ENCODE measurements at regions of chr16 and their contacts with region 1.

Region 1: DNA sequence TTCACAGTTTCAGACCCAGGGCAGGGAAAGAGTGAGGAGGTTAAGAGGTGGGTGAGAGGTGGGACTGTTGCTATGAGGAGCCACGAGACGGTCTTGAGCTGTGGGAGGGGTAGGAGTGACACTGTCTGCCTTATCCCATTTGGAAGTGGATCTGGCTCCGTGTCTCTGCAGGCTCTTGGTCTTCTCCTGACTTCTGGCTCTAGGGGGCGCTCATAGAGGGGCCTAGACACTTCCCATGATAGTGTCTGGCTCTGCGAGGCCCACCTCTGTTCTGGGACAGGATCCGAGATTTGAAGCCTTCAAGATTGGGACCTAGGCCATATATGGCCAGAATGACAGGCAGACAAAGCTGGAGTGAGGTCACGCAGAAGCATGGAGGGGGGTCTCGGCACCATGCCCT is 204.5 kb downstream of the GSG1L start:
- DNase-seq: peak in 1 of 2 experiments; percentile 71
- H3K4me3 ChIP-seq: no peak overlapping the region
- H3K27ac ChIP-seq: no peak overlapping the region
- H3K4me1 ChIP-seq: no peaks in the 10 kb centered on the region
- H3K27me3 ChIP-seq: no peaks in the 10 kb centered on the region
- CTCF ChIP-seq: peak; percentile 38 to 76 (median 64)
- EP300 ChIP-seq: no peak
- POLR2A ChIP-seq: no peak
- RAD21 ChIP-seq: peak; percentile 39 to 56; a peak in 3 of 4 replicates

Region 2: GRCh38 chr16:27690608-27691007 is 168.4 kb before region 1 on chr16:
- CTCF ChIA-PET with region 1: interaction called, 23 read pairs
- POLR2A ChIA-PET with region 1: no interaction called
- DNase-seq: peak in 1 of 2 experiments; percentile 77
- H3K4me3 ChIP-seq: no peak overlapping the region
- H3K27ac ChIP-seq: no peak overlapping the region
- H3K4me1 ChIP-seq: no peaks in the 10 kb centered on the region
- H3K27me3 ChIP-seq: no peaks in the 10 kb centered on the region
- CTCF ChIP-seq: peak; percentile 69 to 94 (median 94)
- EP300 ChIP-seq: no peak
- POLR2A ChIP-seq: no peak
- RAD21 ChIP-seq: peak; percentile 83

Region 3: DNA sequence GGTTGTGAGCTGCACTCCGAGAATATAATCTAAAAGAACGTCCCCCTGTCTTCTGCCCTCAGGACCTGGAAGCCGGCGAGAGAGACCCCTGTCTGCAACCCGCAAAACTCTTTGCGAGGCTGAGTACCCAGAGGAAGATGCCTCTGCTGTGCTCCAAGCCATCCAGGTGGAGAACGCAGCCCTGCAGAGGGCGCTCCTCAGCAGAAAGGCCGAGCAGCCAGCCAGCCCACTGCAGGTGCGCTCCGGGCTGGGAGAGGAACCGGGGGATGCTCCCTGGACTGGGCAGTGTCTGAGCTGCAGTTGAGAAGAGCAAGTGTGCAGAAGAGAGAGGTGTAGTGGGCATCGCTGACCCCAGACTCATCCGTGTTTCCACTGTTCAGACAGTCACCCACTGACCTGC is 160.8 kb before region 1 on chr16:
- CTCF ChIA-PET with region 1: interaction called, 19 read pairs
- POLR2A ChIA-PET with region 1: no interaction called
- DNase-seq: peak; percentile 70 to 95
- H3K4me3 ChIP-seq: no peak overlapping the region
- H3K27ac ChIP-seq: no peak overlapping the region
- H3K4me1 ChIP-seq: peaks cover 0 to 11% (median 2%) of the 10 kb centered on the region in 4 experiments; a peak in 4 of 7 replicates
- H3K27me3 ChIP-seq: no peaks in the 10 kb centered on the region
- CTCF ChIP-seq: peak; percentile 97 to 98 (median 97)
- EP300 ChIP-seq: no peak
- POLR2A ChIP-seq: no peak
- RAD21 ChIP-seq: peak; percentile 68 to 81

Region 4: DNA sequence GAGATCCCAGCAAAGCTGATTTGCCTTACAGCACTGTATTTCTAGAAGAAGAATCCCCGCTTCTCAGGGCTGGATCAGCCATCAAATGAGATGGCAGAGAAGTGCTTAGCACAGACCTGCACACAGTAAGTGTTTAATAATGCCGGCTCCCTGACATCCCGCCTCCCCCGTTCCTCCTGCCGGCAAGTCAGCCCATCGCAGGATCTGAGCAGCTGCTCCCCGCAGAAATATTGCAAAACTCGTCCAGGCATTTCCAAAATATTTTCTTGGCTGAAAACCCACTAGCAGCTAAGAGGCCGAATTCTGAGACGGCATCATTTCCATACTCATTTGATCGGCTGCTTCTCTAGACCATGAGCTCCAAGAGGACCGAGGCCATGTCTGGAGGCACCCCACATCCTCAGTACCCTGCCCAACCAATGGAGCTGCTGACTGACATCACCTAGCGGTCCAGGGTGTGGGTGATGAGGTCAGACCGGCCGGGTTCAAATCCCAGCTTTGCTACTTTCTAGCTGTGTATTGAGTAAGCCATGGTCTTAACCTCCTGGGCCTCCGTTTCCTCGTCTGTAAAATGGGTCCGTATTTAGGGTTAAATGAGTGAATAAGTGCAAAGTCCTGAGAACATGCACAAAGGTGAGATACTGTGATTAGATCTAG is 57.6 kb before region 1 on chr16:
- CTCF ChIA-PET with region 1: interaction called, 15 read pairs
- POLR2A ChIA-PET with region 1: no interaction called
- DNase-seq: no peak
- H3K4me3 ChIP-seq: no peak overlapping the region
- H3K27ac ChIP-seq: no peak overlapping the region
- H3K4me1 ChIP-seq: peaks cover 0 to 4% (median 1%) of the 10 kb centered on the region in 4 experiments; a peak in 5 of 7 replicates
- H3K27me3 ChIP-seq: no peaks in the 10 kb centered on the region; a peak in 1 of 7 replicates
- CTCF ChIP-seq: no peak
- EP300 ChIP-seq: no peak
- POLR2A ChIP-seq: no peak
- RAD21 ChIP-seq: no peak

Region 5: GRCh38 chr16:27826081-27826892 is 32.7 kb before region 1 on chr16:
- CTCF ChIA-PET with region 1: interaction called, 10 read pairs
- POLR2A ChIA-PET with region 1: no interaction called
- DNase-seq: no peak
- H3K4me3 ChIP-seq: no peak overlapping the region
- H3K27ac ChIP-seq: no peak overlapping the region
- H3K4me1 ChIP-seq: no peaks in the 10 kb centered on the region; a peak in 1 of 7 replicates
- H3K27me3 ChIP-seq: no peaks in the 10 kb centered on the region
- CTCF ChIP-seq: no peak
- EP300 ChIP-seq: no peak
- POLR2A ChIP-seq: no peak
- RAD21 ChIP-seq: no peak

Region 6: GRCh38 chr16:27847030-27847550 is 11.9 kb before region 1 on chr16:
- CTCF ChIA-PET with region 1: interaction called, 15 read pairs
- POLR2A ChIA-PET with region 1: no interaction called
- DNase-seq: no peak
- H3K4me3 ChIP-seq: no peak overlapping the region
- H3K27ac ChIP-seq: no peak overlapping the region
- H3K4me1 ChIP-seq: peaks cover 0 to 3% (median 1%) of the 10 kb centered on the region in 4 experiments; a peak in 3 of 7 replicates
- H3K27me3 ChIP-seq: no peaks in the 10 kb centered on the region
- CTCF ChIP-seq: no peak
- EP300 ChIP-seq: no peak
- POLR2A ChIP-seq: no peak
- RAD21 ChIP-seq: no peak